ENCODE measurements at regions of chr15 and their contacts with region 1.

Region 1: DNA sequence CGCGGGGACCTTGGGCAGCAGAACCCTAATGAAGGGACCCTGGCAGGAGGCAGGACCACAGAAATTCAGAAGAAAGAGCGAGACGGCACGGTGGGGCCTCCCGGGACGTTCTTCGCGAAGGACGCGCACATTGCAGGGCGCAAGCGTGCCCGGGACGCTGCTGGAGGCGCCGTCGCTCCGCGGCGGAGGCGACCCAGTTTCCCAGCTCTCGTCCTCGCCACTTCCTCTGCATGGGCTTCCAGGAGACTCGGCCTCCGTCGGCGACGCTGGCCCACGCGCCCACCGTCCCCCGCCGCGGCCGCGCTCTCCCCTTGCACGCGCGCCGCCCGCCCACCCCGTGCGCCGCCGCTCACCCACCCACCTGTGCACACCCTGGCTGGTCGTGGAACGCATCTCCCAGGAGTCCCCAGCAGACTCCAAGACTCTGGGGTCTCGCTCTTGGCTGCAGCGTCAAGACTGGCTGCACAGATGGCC is 31.8 kb upstream of the SMAD3 start:
- DNase-seq: peak in 7 of 9 experiments; percentile 21 to 64 (median 33)
- ATAC-seq: peak; percentile 58
- H3K4me3 ChIP-seq: peak overlapping the region; percentile 33 to 37
- H3K4me3 Mint-ChIP-seq: peak overlapping the region; percentile 68
- H3K27ac ChIP-seq: no peak overlapping the region
- H3K27ac Mint-ChIP-seq: no peak overlapping the region
- H3K4me1 ChIP-seq: peaks cover 12% of the 10 kb centered on the region
- H3K4me1 Mint-ChIP-seq: peaks cover 16% of the 10 kb centered on the region
- H3K27me3 ChIP-seq: peaks cover 3 to 4% of the 10 kb centered on the region in 2 experiments
- H3K27me3 Mint-ChIP-seq: peaks cover 2% of the 10 kb centered on the region
- CTCF ChIP-seq: no peak

Region 2: DNA sequence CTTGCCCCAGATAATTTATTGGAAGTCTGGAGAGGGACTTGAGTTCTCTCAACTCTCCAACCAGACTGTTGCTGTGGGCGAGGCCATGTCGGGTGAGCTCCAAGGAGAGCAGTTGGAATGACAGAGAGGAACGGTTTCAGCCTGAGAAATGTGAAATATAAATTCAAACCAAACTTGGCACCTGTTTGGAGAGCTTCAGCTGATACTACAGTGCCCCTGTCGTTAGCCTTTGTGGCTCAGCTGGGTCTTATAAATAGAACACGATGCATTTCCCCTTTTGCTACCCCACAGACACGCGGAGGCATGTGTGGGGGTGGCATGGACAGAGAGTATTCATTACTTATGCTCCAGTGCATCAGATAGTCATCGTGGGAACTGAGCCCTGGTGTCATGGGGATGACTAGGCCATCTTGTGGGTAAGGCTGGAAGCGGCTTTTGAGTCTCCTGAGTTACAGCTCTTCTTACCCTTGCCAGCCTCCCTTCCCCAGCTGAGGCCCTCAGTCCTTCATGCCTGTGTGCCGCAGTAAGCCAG is 47.4 kb after region 1 on chr15:
- CTCF ChIA-PET with region 1: interaction called, 3 read pairs
- POLR2A ChIA-PET with region 1: no interaction called
- intact Hi-C with region 1: loop called in 1 of 2 experiments (anchors 5 kb)
- DNase-seq: peak in 5 of 9 experiments; percentile 33 to 74 (median 55)
- ATAC-seq: peak; percentile 41
- H3K4me3 ChIP-seq: no peak overlapping the region
- H3K4me3 Mint-ChIP-seq: peak overlapping the region; percentile 33
- H3K27ac ChIP-seq: peak overlapping the region in 1 of 2 experiments; percentile 31
- H3K27ac Mint-ChIP-seq: peak overlapping the region; percentile 72
- H3K4me1 ChIP-seq: peaks cover 55% of the 10 kb centered on the region
- H3K4me1 Mint-ChIP-seq: peaks cover 85% of the 10 kb centered on the region
- H3K27me3 ChIP-seq: no peaks in the 10 kb centered on the region
- H3K27me3 Mint-ChIP-seq: no peaks in the 10 kb centered on the region
- CTCF ChIP-seq: no peak

Region 3: DNA sequence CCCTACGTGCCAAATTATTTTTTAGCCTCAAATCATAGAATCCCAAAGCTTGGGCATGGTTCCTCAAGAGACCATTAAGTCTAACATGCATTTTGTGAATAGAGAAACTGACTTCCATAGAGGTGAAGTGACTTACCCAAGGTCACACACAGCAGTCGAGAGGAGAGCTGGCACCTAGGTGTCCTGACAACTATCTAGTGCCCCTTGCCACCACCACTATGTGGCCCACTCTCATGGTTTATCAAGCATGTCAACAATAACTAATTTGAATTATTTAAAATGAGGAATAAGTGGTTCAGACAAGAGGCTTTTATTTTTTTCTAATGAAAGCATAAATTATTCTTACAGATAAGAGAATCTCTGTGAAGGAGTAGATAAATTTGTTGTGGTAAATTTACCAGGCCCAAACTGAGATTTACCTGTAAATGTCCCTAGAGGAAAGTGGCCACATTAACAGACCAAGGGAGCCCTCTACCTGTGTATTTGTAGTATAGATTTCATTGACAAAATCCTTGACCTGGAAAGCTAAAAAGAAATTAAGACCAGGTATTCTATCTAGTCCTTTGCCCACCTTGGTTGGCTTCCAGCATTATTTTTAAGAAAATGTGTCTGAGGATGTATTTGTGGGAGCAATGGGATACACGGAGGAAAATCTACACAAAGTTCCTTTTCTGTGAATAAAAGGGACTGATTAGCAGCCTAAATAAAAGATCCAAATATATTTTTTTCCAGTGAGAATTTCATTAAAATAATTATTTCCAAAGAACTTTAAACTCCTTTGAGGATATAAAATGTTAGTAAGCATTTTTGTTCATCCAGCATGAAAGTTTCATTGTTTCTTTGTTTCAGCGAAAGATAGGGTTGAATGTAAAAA is 270.1 kb after region 1 on chr15:
- CTCF ChIA-PET with region 1: interaction called, 3 read pairs
- POLR2A ChIA-PET with region 1: no interaction called
- intact Hi-C with region 1: loop called in 1 of 2 experiments (anchors 5 kb)
- DNase-seq: peak in 4 of 9 experiments; percentile 16 to 69 (median 42)
- ATAC-seq: peak; percentile 51
- H3K4me3 ChIP-seq: no peak overlapping the region
- H3K4me3 Mint-ChIP-seq: no peak overlapping the region
- H3K27ac ChIP-seq: no peak overlapping the region
- H3K27ac Mint-ChIP-seq: no peak overlapping the region
- H3K4me1 ChIP-seq: no peaks in the 10 kb centered on the region
- H3K4me1 Mint-ChIP-seq: no peaks in the 10 kb centered on the region
- H3K27me3 ChIP-seq: no peaks in the 10 kb centered on the region
- H3K27me3 Mint-ChIP-seq: peaks cover 2% of the 10 kb centered on the region
- CTCF ChIP-seq: peak; percentile 71

Measured in CD8-positive, alpha-beta T cell (primary cell).